ENCODE measurements at regions of chr5 and their contacts with region 1.

Region 1: GRCh38 chr5:174935854-174936474 is 211.6 kb downstream of the MSX2 start:
- DNase-seq: peak; percentile 51
- ATAC-seq: peak; percentile 98
- H3K4me3 ChIP-seq: no peak overlapping the region
- H3K27ac ChIP-seq: no peak overlapping the region
- H3K4me1 ChIP-seq: peaks cover 0 to 4% of the 10 kb centered on the region in 2 experiments; a peak in 1 of 4 replicates
- H3K27me3 ChIP-seq: no peaks in the 10 kb centered on the region
- CTCF ChIP-seq: peak; percentile 83 to 93 (median 92)
- POLR2A ChIP-seq: no peak
- RAD21 ChIP-seq: peak; percentile 93

Region 2: DNA sequence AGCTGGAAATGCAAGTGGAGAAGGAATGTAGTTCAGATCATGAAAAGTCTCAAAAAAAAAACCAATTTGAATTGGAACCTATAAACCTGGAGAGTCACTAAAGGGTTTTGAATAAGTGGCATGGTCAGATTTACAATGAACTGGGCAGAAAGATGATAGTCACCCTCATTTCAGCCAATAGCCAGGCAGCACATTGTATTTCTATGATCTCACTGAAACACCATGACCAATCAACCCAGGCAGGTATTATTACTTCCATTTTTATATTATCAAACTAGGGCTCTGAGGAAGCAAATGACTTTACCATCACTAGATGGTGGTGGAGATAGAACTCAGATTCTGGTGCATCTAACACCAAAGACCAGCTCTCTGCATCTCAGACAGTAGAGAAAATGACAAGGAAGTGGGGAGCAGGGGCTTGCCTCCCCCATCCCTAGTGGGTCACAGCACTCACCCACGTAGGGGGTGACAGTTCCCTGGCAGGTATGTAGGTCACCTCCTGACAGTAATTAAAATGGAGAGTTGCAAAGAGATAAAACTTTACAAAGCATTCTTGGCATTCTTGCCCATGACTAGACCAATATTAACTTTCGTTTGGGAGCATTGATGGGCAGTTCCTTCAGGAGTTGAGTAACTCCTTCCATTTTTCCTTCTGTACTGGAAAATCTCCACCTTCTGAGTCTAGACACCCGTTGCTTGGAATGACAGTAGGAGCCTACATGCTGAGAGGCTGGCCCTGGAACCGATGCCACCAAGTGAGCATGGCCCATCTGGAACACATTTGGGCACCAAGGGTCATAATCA is 293.3 kb before region 1 on chr5:
- CTCF ChIA-PET with region 1: no interaction called
- POLR2A ChIA-PET with region 1: no interaction called
- RAD21 ChIA-PET with region 1: no interaction called
- intact Hi-C with region 1: no loop called
- DNase-seq: no peak
- ATAC-seq: peak; percentile 22; the same call in 1 of the 2 replicates
- H3K4me3 ChIP-seq: no peak overlapping the region
- H3K27ac ChIP-seq: no peak overlapping the region
- H3K4me1 ChIP-seq: peaks cover 0 to 7% of the 10 kb centered on the region in 2 experiments; a peak in 2 of 4 replicates
- H3K27me3 ChIP-seq: no peaks in the 10 kb centered on the region
- CTCF ChIP-seq: no peak
- POLR2A ChIP-seq: no peak
- RAD21 ChIP-seq: no peak

Region 3: DNA sequence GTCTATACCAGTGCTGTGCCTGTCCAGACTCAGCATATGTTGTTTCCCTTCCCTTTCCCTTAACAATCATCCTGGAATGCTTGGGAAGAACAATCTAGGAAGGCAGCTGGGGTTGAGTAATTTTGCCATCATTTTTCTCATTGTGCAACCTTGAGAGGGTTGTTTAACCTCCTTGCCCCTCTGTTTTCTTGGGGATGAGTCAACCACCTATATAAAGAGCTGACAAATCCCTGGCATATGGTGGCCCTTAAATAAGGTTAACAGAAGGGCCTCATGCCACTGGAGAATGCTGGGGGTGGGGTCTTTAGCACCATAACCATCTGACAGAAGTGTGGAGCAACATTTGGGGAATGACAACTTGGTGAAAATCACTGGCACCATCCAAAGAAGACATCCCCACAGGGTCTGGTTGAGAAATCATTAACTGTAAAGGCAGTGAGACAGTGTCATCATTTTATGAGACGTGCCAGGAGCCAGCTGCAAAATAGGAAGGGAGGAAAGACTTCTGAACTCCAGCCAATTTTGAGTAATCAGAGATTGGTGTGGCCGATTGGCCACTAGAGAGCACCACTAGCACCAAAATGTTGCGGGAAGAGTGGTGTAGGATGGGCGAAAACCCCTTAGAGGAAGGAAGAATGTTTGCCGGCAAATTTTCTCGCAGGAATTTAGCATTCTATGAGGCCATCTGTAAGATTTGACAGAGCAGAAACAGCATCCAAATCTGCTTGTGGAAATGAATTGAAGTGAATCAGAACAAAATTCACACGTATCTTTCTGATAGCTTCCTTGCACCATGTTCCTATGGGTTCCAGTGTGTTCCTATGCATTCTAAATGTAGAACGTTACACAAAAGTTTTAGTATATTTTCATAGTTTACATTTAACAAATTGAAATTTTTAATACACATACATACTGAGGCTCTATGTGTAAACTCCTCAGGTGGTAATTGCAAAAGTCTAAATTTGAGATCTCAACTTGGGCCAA is 97.8 kb before region 1 on chr5:
- CTCF ChIA-PET with region 1: no interaction called
- POLR2A ChIA-PET with region 1: no interaction called
- RAD21 ChIA-PET with region 1: no interaction called
- intact Hi-C with region 1: loop called (anchors 2 kb)
- DNase-seq: peak; percentile 16
- ATAC-seq: peak; percentile 74
- H3K4me3 ChIP-seq: no peak overlapping the region
- H3K27ac ChIP-seq: no peak overlapping the region
- H3K4me1 ChIP-seq: no peaks in the 10 kb centered on the region
- H3K27me3 ChIP-seq: peaks cover 9% of the 10 kb centered on the region; the same call in 1 of the 2 replicates
- CTCF ChIP-seq: peak; percentile 29 to 66 (median 56); a peak in 5 of 6 replicates
- POLR2A ChIP-seq: no peak
- RAD21 ChIP-seq: peak; percentile 50

Region 4: GRCh38 chr5:174895363-174895762 is 40.6 kb before region 1 on chr5:
- CTCF ChIA-PET with region 1: no interaction called
- POLR2A ChIA-PET with region 1: no interaction called
- RAD21 ChIA-PET with region 1: no interaction called
- intact Hi-C with region 1: loop called (anchors 5 kb)
- DNase-seq: peak; percentile 7
- ATAC-seq: peak; percentile 97
- H3K4me3 ChIP-seq: no peak overlapping the region
- H3K27ac ChIP-seq: no peak overlapping the region
- H3K4me1 ChIP-seq: no peaks in the 10 kb centered on the region
- H3K27me3 ChIP-seq: no peaks in the 10 kb centered on the region; the same call in 1 of the 2 replicates
- CTCF ChIP-seq: peak; percentile 16 to 53 (median 50); a peak in 4 of 6 replicates
- POLR2A ChIP-seq: no peak
- RAD21 ChIP-seq: peak; percentile 38; the same call in 1 of the 2 replicates

Region 5: DNA sequence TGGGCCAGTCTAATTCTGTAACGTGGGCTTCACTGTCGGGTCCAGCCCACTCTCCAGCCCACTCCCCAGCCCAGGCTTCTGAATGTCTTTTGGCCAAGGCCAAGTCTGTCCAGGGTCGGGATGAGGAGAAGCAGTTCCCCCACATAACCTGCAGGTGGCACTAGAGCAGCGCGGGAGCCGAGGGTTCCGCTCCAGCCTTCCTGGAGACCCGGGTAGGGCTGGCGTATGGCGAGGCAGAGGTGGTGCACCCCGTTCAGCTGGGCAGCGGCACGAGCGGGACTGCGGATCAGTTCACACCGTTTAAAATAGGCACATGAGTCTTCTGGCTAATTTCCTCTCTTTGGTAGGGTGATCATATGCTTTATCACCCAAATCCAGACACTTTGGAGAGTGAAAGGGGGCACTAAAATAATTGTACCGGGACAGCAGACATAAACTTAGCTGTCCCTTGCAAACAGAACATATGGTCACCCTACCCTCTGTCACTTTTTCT is 25.7 kb before region 1 on chr5:
- CTCF ChIA-PET with region 1: interaction called, 4 read pairs
- POLR2A ChIA-PET with region 1: no interaction called
- RAD21 ChIA-PET with region 1: no interaction called
- intact Hi-C with region 1: loop called (anchors 1 kb)
- DNase-seq: peak; percentile 49
- ATAC-seq: peak; percentile 100
- H3K4me3 ChIP-seq: peak overlapping the region; percentile 15; a peak in 2 of 4 replicates
- H3K27ac ChIP-seq: no peak overlapping the region
- H3K4me1 ChIP-seq: peaks cover 0 to 4% of the 10 kb centered on the region in 2 experiments; a peak in 1 of 4 replicates
- H3K27me3 ChIP-seq: no peaks in the 10 kb centered on the region
- CTCF ChIP-seq: peak; percentile 74 to 96 (median 93)
- POLR2A ChIP-seq: no peak
- RAD21 ChIP-seq: peak; percentile 95

Region 6: GRCh38 chr5:175335691-175336090 is 399.7 kb after region 1 on chr5:
- CTCF ChIA-PET with region 1: no interaction called
- POLR2A ChIA-PET with region 1: no interaction called
- RAD21 ChIA-PET with region 1: no interaction called
- intact Hi-C with region 1: no loop called
- DNase-seq: no peak
- ATAC-seq: no peak
- H3K4me3 ChIP-seq: no peak overlapping the region
- H3K27ac ChIP-seq: no peak overlapping the region
- H3K4me1 ChIP-seq: peaks cover 0 to 8% of the 10 kb centered on the region in 2 experiments; a peak in 1 of 4 replicates
- H3K27me3 ChIP-seq: no peaks in the 10 kb centered on the region
- CTCF ChIP-seq: no peak
- POLR2A ChIP-seq: no peak
- RAD21 ChIP-seq: no peak

Measured in HCT116 (cell line).